Panc1 (cell line): ENCODE measurements at regions of chr12 and their contacts with region 1.

Region 1: GRCh38 chr12:124842073-124842749 is 21.5 kb downstream of the SCARB1 start:
- DNase-seq: no peak
- ATAC-seq: no peak
- H3K4me3 ChIP-seq: no peak overlapping the region
- H3K27ac ChIP-seq: peak overlapping the region; percentile 69
- H3K4me1 ChIP-seq: peaks cover 50% of the 10 kb centered on the region
- H3K27me3 ChIP-seq: no peaks in the 10 kb centered on the region
- CTCF ChIP-seq: no peak

Region 2: GRCh38 chr12:124259154-124260066 is 582.8 kb before region 1 on chr12:
- CTCF ChIA-PET with region 1: no interaction called
- POLR2A ChIA-PET with region 1: no interaction called
- in situ Hi-C with region 1: no loop called
- intact Hi-C with region 1: no loop called
- DNase-seq: no peak
- ATAC-seq: no peak
- H3K4me3 ChIP-seq: no peak overlapping the region
- H3K27ac ChIP-seq: no peak overlapping the region
- H3K4me1 ChIP-seq: no peaks in the 10 kb centered on the region
- H3K27me3 ChIP-seq: peaks cover 14% of the 10 kb centered on the region
- CTCF ChIP-seq: no peak

Region 3: GRCh38 chr12:124805876-124806668 is 36.1 kb before region 1 on chr12:
- CTCF ChIA-PET with region 1: interaction called, 12 read pairs
- POLR2A ChIA-PET with region 1: no interaction called
- in situ Hi-C with region 1: no loop called
- intact Hi-C with region 1: no loop called
- DNase-seq: no peak
- ATAC-seq: no peak
- H3K4me3 ChIP-seq: no peak overlapping the region
- H3K27ac ChIP-seq: no peak overlapping the region
- H3K4me1 ChIP-seq: no peaks in the 10 kb centered on the region
- H3K27me3 ChIP-seq: no peaks in the 10 kb centered on the region
- CTCF ChIP-seq: no peak